Naive thymus-derived CD4-positive, alpha-beta T cell (primary cell): ENCODE measurements at regions of chr16 and their contacts with region 1.

Region 1: DNA sequence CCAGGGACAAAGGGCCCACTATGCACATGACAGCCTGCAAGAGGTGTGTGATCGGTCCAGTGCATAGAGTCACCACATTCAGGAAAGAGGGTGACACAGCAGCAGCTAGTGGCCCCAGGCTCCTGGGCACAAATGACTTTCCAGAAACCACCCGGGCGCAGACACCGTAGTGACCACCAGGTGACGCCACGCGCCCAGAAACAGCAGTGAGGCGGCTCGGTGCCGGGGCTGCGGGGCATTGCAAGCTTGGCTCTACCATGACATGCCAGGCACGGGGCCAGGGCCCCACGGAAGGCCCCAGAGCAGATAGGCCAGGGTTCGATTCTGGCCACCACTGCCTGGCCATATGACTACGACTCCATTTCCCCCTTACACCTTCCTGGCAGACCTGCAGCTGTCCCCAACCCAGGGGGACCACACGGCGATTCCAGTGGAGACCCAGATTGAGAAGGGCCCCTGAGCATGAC is 6.7 kb downstream of the RHBDF1 start:
- DNase-seq: peak; percentile 67 to 89 (median 81)
- ATAC-seq: peak; percentile 91
- H3K4me3 ChIP-seq: no peak overlapping the region
- H3K4me3 Mint-ChIP-seq: no peak overlapping the region
- H3K27ac ChIP-seq: no peak overlapping the region
- H3K27ac Mint-ChIP-seq: peak overlapping the region in 1 of 9 donors; percentile 63
- H3K4me1 ChIP-seq: no peaks in the 10 kb centered on the region
- H3K4me1 Mint-ChIP-seq: peaks cover 0 to 8% (median 3%) of the 10 kb centered on the region in 7 donors
- H3K27me3 ChIP-seq: no peaks in the 10 kb centered on the region
- H3K27me3 Mint-ChIP-seq: peaks cover 0 to 20% (median 12%) of the 10 kb centered on the region in 5 donors

Region 2: GRCh38 chr16:96935-97381 is 31.3 kb after region 1 on chr16:
- CTCF ChIA-PET with region 1: interaction called, 96 read pairs
- POLR2A ChIA-PET with region 1: interaction called, 7 read pairs
- intact Hi-C with region 1: loop called (anchors 1 kb)
- DNase-seq: peak; percentile 80 to 92 (median 89)
- ATAC-seq: peak; percentile 100
- H3K4me3 ChIP-seq: no peak overlapping the region
- H3K4me3 Mint-ChIP-seq: no peak overlapping the region
- H3K27ac ChIP-seq: no peak overlapping the region
- H3K27ac Mint-ChIP-seq: peak overlapping the region in 2 of 9 donors; percentile 38 to 53
- H3K4me1 ChIP-seq: no peaks in the 10 kb centered on the region
- H3K4me1 Mint-ChIP-seq: peaks cover 0 to 10% (median 4%) of the 10 kb centered on the region in 7 donors
- H3K27me3 ChIP-seq: no peaks in the 10 kb centered on the region
- H3K27me3 Mint-ChIP-seq: no peaks in the 10 kb centered on the region

Region 3: GRCh38 chr16:106623-107324 is 41.1 kb after region 1 on chr16:
- CTCF ChIA-PET with region 1: interaction called, 12 read pairs
- POLR2A ChIA-PET with region 1: no interaction called
- intact Hi-C with region 1: no loop called
- DNase-seq: peak in 8 of 9 donors; percentile 37 to 73 (median 64)
- ATAC-seq: peak; percentile 89
- H3K4me3 ChIP-seq: no peak overlapping the region
- H3K4me3 Mint-ChIP-seq: no peak overlapping the region
- H3K27ac ChIP-seq: no peak overlapping the region
- H3K27ac Mint-ChIP-seq: peak overlapping the region in 3 of 9 donors; percentile 6 to 62 (median 39)
- H3K4me1 ChIP-seq: no peaks in the 10 kb centered on the region
- H3K4me1 Mint-ChIP-seq: peaks cover 0 to 7% (median 4%) of the 10 kb centered on the region in 7 donors
- H3K27me3 ChIP-seq: no peaks in the 10 kb centered on the region
- H3K27me3 Mint-ChIP-seq: no peaks in the 10 kb centered on the region

Region 4: DNA sequence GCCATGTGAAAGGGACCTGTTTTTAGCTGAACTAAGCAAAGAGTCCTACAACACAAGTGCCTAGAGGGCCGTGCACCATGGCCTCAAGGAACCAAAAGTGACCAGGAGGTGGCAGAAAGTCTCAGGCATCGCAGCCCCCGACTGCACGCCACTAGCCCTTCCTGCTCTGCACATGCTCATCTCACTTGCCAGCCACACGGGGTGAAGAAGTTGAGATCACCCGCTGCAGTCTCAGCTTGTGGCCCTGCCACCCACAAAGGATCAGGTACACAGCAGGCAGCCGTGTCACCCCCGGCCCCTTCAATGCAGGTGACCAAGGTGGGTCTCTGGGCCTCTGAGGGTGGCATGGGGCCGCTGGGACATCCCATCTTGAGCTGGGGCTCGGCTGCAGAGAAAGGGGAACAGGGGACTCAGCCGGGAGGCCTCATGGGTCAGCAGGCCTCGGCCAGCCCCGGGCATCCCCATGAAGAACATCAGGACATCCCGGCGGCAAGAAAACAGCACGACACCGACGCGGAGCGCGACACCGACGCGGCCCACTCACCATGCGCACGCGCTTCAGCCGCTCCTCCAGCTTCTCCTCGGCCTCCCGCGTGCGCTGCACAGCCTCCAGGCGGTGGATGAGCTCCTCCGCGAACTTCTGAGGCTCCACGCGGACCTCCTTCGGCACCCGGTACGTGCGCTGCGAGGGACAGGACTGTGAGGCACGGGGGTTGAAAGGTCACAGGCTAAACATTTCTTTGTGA is 238.2 kb after region 1 on chr16:
- CTCF ChIA-PET with region 1: no interaction called
- POLR2A ChIA-PET with region 1: no interaction called
- intact Hi-C with region 1: no loop called
- DNase-seq: no peak
- ATAC-seq: peak; percentile 69
- H3K4me3 ChIP-seq: no peak overlapping the region
- H3K4me3 Mint-ChIP-seq: no peak overlapping the region
- H3K27ac ChIP-seq: no peak overlapping the region
- H3K27ac Mint-ChIP-seq: peak overlapping the region in 3 of 9 donors; percentile 14 to 43 (median 32)
- H3K4me1 ChIP-seq: no peaks in the 10 kb centered on the region
- H3K4me1 Mint-ChIP-seq: peaks cover 0 to 19% (median 13%) of the 10 kb centered on the region in 7 donors
- H3K27me3 ChIP-seq: no peaks in the 10 kb centered on the region
- H3K27me3 Mint-ChIP-seq: no peaks in the 10 kb centered on the region

Region 5: GRCh38 chr16:361872-362701 is 296.4 kb after region 1 on chr16:
- CTCF ChIA-PET with region 1: interaction called, 10 read pairs
- POLR2A ChIA-PET with region 1: no interaction called
- intact Hi-C with region 1: loop called in 1 of 2 experiments (anchors 1 kb)
- DNase-seq: peak; percentile 43 to 74 (median 70)
- ATAC-seq: peak; percentile 92
- H3K4me3 ChIP-seq: no peak overlapping the region
- H3K4me3 Mint-ChIP-seq: peak overlapping the region in 8 of 10 donors; percentile 12 to 77 (median 54)
- H3K27ac ChIP-seq: no peak overlapping the region
- H3K27ac Mint-ChIP-seq: peak overlapping the region in 7 of 9 donors; percentile 32 to 84 (median 69)
- H3K4me1 ChIP-seq: no peaks in the 10 kb centered on the region
- H3K4me1 Mint-ChIP-seq: peaks cover 0 to 12% (median 6%) of the 10 kb centered on the region in 7 donors
- H3K27me3 ChIP-seq: no peaks in the 10 kb centered on the region
- H3K27me3 Mint-ChIP-seq: peaks cover 0 to 4% (median 0%) of the 10 kb centered on the region in 5 donors